ENCODE measurements at regions of chr9 and their contacts with region 1.

Region 1: DNA sequence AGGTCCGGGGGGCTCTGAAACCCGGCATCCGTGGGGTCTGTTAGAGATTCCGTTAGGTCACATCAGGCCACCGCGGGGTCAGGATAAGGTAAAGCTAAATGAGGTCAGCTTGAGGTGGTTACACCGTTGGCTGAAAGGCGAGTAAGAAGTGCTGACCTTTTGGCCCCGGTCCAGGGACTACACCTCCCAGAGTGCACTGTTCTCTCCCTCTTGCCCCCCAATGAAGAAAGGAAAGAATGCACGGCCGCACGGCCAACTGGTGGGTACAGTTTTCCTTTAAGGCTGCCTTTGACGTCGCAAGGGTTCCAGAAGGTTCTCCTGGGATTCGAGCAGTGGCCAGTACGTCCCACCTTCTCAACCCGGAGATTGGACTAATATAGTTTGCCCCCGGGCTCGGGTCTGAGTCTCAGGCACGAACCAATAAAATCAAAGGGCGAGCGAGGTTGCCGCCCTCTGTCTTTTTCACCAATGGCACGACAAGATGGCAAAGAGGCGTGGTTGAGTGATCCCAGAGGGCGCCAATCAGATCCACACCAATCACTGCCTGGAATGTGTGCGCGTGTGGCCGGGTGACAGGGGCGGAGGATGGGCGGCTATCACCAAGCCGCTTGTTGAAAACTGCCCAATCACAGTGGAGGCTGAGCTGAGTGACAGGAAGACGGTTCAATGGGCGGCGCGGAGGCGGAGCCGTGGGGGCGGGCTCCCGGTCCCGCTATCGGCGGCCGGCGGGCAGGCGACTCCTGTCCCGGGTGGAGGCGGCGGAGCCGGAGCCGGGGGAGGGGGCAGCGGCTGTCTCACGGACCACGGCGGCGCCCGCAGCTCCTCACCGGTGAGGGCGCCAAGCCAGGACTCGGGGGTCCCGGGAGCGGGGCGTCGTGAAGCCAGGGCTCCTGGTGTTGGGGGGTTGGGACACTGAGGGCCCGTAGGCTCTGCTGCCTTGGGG is at the start of gene DNAJB5:
- DNase-seq: peak; percentile 96 to 98 (median 97)
- ATAC-seq: peak; percentile 96
- H3K4me3 ChIP-seq: peak within 1 kb of the TSS; percentile 77
- H3K4me3 Mint-ChIP-seq: peak within 1 kb of the TSS; percentile 85 to 100 (median 96)
- H3K27ac ChIP-seq: peak within 1 kb of the TSS; percentile 77
- H3K27ac Mint-ChIP-seq: peak within 1 kb of the TSS; percentile 64 to 94 (median 89)
- H3K4me1 ChIP-seq: peaks cover 19 to 37% of the 10 kb centered on the region in 2 donors
- H3K4me1 Mint-ChIP-seq: peaks cover 35 to 62% (median 49%) of the 10 kb centered on the region in 7 donors
- H3K27me3 ChIP-seq: no peaks in the 10 kb centered on the region
- H3K27me3 Mint-ChIP-seq: no peaks in the 10 kb centered on the region
- total RNA-seq, gene DNAJB5: 1.1 to 3.7 (median 1.4) TPM

Region 2: GRCh38 chr9:34328987-34329832 is 660.1 kb before region 1 on chr9 and contains the starts of genes KIF24 and NUDT2:
- CTCF ChIA-PET with region 1: no interaction called
- POLR2A ChIA-PET with region 1: no interaction called
- intact Hi-C with region 1: loop called (anchors 2 to 5 kb)
- DNase-seq: peak; percentile 89 to 99 (median 96)
- ATAC-seq: peak; percentile 95
- H3K4me3 ChIP-seq: peak within 1 kb of the TSS; percentile 98
- H3K4me3 Mint-ChIP-seq: peak within 1 kb of the TSS; percentile 88 to 97 (median 94)
- H3K27ac ChIP-seq: peak within 1 kb of the TSS; percentile 94
- H3K27ac Mint-ChIP-seq: peak within 1 kb of the TSS; percentile 77 to 98 (median 95)
- H3K4me1 ChIP-seq: peaks cover 3 to 8% of the 10 kb centered on the region in 2 donors
- H3K4me1 Mint-ChIP-seq: peaks cover 11 to 45% (median 29%) of the 10 kb centered on the region in 7 donors
- H3K27me3 ChIP-seq: no peaks in the 10 kb centered on the region
- H3K27me3 Mint-ChIP-seq: no peaks in the 10 kb centered on the region
- total RNA-seq, gene KIF24: 0.11 to 6.0 (median 0.35) TPM
- total RNA-seq, gene NUDT2: 7.5 to 30.0 (median 22.7) TPM

Region 3: GRCh38 chr9:34637356-34638137 is 351.7 kb before region 1 on chr9 and contains the start of gene SIGMAR1:
- CTCF ChIA-PET with region 1: no interaction called
- POLR2A ChIA-PET with region 1: no interaction called
- intact Hi-C with region 1: loop called (anchors 1 to 10 kb)
- DNase-seq: peak; percentile 88 to 97 (median 95)
- ATAC-seq: peak; percentile 97
- H3K4me3 ChIP-seq: peak within 1 kb of the TSS; percentile 94
- H3K4me3 Mint-ChIP-seq: peak within 1 kb of the TSS; percentile 88 to 93 (median 90)
- H3K27ac ChIP-seq: peak within 1 kb of the TSS; percentile 70
- H3K27ac Mint-ChIP-seq: peak within 1 kb of the TSS; percentile 88 to 98 (median 95)
- H3K4me1 ChIP-seq: peaks cover 21 to 22% of the 10 kb centered on the region in 2 donors
- H3K4me1 Mint-ChIP-seq: peaks cover 26 to 45% (median 37%) of the 10 kb centered on the region in 7 donors
- H3K27me3 ChIP-seq: no peaks in the 10 kb centered on the region
- H3K27me3 Mint-ChIP-seq: no peaks in the 10 kb centered on the region
- total RNA-seq, gene SIGMAR1: 20.7 to 63.8 (median 46.0) TPM

Region 4: GRCh38 chr9:34759432-34760134 is 229.7 kb before region 1 on chr9:
- CTCF ChIA-PET with region 1: no interaction called
- POLR2A ChIA-PET with region 1: no interaction called
- intact Hi-C with region 1: loop called (anchors 2 kb)
- DNase-seq: no peak
- ATAC-seq: no peak
- H3K4me3 ChIP-seq: no peak overlapping the region
- H3K4me3 Mint-ChIP-seq: no peak overlapping the region
- H3K27ac ChIP-seq: no peak overlapping the region
- H3K27ac Mint-ChIP-seq: no peak overlapping the region
- H3K4me1 ChIP-seq: no peaks in the 10 kb centered on the region
- H3K4me1 Mint-ChIP-seq: peaks cover 0 to 6% (median 0%) of the 10 kb centered on the region in 7 donors
- H3K27me3 ChIP-seq: no peaks in the 10 kb centered on the region
- H3K27me3 Mint-ChIP-seq: peaks cover 32 to 54% (median 44%) of the 10 kb centered on the region in 5 donors

Region 5: GRCh38 chr9:35071814-35072460 is 82.7 kb after region 1 on chr9:
- CTCF ChIA-PET with region 1: no interaction called
- POLR2A ChIA-PET with region 1: interaction called, 3 read pairs
- intact Hi-C with region 1: loop called (anchors 1 kb)
- DNase-seq: peak in 8 of 9 donors; percentile 67 to 83 (median 71)
- ATAC-seq: peak; percentile 70
- H3K4me3 ChIP-seq: peak overlapping the region; percentile 53
- H3K4me3 Mint-ChIP-seq: peak overlapping the region; percentile 74 to 95 (median 88)
- H3K27ac ChIP-seq: peak overlapping the region; percentile 93
- H3K27ac Mint-ChIP-seq: peak overlapping the region; percentile 81 to 96 (median 91)
- H3K4me1 ChIP-seq: peaks cover 22 to 43% of the 10 kb centered on the region in 2 donors
- H3K4me1 Mint-ChIP-seq: peaks cover 34 to 66% (median 53%) of the 10 kb centered on the region in 7 donors
- H3K27me3 ChIP-seq: no peaks in the 10 kb centered on the region
- H3K27me3 Mint-ChIP-seq: peaks cover 0 to 3% (median 0%) of the 10 kb centered on the region in 5 donors

Region 6: GRCh38 chr9:35111001-35111933 is 122.0 kb after region 1 on chr9:
- CTCF ChIA-PET with region 1: interaction called, 3 read pairs
- POLR2A ChIA-PET with region 1: no interaction called
- intact Hi-C with region 1: loop called (anchors 1 kb)
- DNase-seq: peak; percentile 77 to 96 (median 91)
- ATAC-seq: peak; percentile 86
- H3K4me3 ChIP-seq: peak overlapping the region; percentile 69
- H3K4me3 Mint-ChIP-seq: peak overlapping the region; percentile 55 to 87 (median 80)
- H3K27ac ChIP-seq: peak overlapping the region; percentile 71
- H3K27ac Mint-ChIP-seq: peak overlapping the region; percentile 62 to 94 (median 85)
- H3K4me1 ChIP-seq: peaks cover 36 to 37% of the 10 kb centered on the region in 2 donors
- H3K4me1 Mint-ChIP-seq: peaks cover 29 to 63% (median 58%) of the 10 kb centered on the region in 7 donors
- H3K27me3 ChIP-seq: no peaks in the 10 kb centered on the region
- H3K27me3 Mint-ChIP-seq: no peaks in the 10 kb centered on the region

Region 7: GRCh38 chr9:35618854-35619799 is 629.9 kb after region 1 on chr9:
- CTCF ChIA-PET with region 1: no interaction called
- POLR2A ChIA-PET with region 1: no interaction called
- intact Hi-C with region 1: no loop called
- DNase-seq: peak in 2 of 9 donors; percentile 7 to 42
- ATAC-seq: peak; percentile 54
- H3K4me3 ChIP-seq: peak overlapping the region; percentile 25
- H3K4me3 Mint-ChIP-seq: peak overlapping the region in 8 of 10 donors; percentile 18 to 89 (median 67)
- H3K27ac ChIP-seq: peak overlapping the region; percentile 38
- H3K27ac Mint-ChIP-seq: peak overlapping the region in 8 of 9 donors; percentile 45 to 92 (median 87)
- H3K4me1 ChIP-seq: peaks cover 27 to 36% of the 10 kb centered on the region in 2 donors
- H3K4me1 Mint-ChIP-seq: peaks cover 33 to 44% (median 38%) of the 10 kb centered on the region in 7 donors
- H3K27me3 ChIP-seq: no peaks in the 10 kb centered on the region
- H3K27me3 Mint-ChIP-seq: no peaks in the 10 kb centered on the region

Region 8: GRCh38 chr9:35814841-35815543 is 825.7 kb after region 1 on chr9 and contains the start of gene HINT2:
- CTCF ChIA-PET with region 1: no interaction called
- POLR2A ChIA-PET with region 1: no interaction called
- intact Hi-C with region 1: loop called (anchors 1 to 5 kb)
- DNase-seq: peak; percentile 84 to 98 (median 96)
- ATAC-seq: peak; percentile 86
- H3K4me3 ChIP-seq: peak within 1 kb of the TSS; percentile 100
- H3K4me3 Mint-ChIP-seq: peak within 1 kb of the TSS; percentile 91 to 100 (median 96)
- H3K27ac ChIP-seq: peak within 1 kb of the TSS; percentile 77
- H3K27ac Mint-ChIP-seq: peak within 1 kb of the TSS; percentile 87 to 99 (median 95)
- H3K4me1 ChIP-seq: peaks cover 19 to 27% of the 10 kb centered on the region in 2 donors
- H3K4me1 Mint-ChIP-seq: peaks cover 23 to 43% (median 38%) of the 10 kb centered on the region in 7 donors
- H3K27me3 ChIP-seq: no peaks in the 10 kb centered on the region
- H3K27me3 Mint-ChIP-seq: peaks cover 0 to 12% (median 0%) of the 10 kb centered on the region in 5 donors
- total RNA-seq, gene HINT2: 14.3 to 50.7 (median 22.2) TPM

Measured in naive thymus-derived CD4-positive, alpha-beta T cell (primary cell).